A673 (cell line): ENCODE measurements at regions of chr5 and their contacts with region 1.

Region 1: DNA sequence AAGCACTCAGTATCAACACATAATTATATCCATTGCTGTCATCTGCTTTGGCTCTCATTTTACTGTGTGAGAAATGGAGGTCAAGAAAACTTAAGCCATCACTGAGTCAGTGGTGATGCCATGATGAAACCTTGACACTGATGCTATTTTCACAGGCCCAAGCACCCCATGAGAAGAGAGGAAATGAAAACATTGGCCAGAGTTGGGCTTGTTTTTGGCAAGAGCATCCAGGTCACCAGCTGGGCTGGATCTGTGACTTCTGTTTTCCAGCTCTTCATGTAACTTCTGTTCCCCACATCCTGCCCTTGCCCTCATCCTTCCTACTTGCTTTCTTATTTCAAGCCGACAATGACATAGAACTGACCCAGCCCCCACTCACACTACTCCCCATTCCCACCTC is 10.0 kb downstream of the LCP2 start:
- DNase-seq: no peak
- H3K4me3 ChIP-seq: no peak overlapping the region
- H3K27ac ChIP-seq: no peak overlapping the region
- H3K4me1 ChIP-seq: no peaks in the 10 kb centered on the region
- H3K27me3 ChIP-seq: no peaks in the 10 kb centered on the region
- CTCF ChIP-seq: no peak

Region 2: GRCh38 chr5:170145462-170145861 is 142.1 kb before region 1 on chr5:
- CTCF ChIA-PET with region 1: no interaction called
- POLR2A ChIA-PET with region 1: no interaction called
- intact Hi-C with region 1: no loop called
- DNase-seq: no peak
- H3K4me3 ChIP-seq: no peak overlapping the region
- H3K27ac ChIP-seq: no peak overlapping the region
- H3K4me1 ChIP-seq: no peaks in the 10 kb centered on the region
- H3K27me3 ChIP-seq: no peaks in the 10 kb centered on the region
- CTCF ChIP-seq: no peak

Region 3: DNA sequence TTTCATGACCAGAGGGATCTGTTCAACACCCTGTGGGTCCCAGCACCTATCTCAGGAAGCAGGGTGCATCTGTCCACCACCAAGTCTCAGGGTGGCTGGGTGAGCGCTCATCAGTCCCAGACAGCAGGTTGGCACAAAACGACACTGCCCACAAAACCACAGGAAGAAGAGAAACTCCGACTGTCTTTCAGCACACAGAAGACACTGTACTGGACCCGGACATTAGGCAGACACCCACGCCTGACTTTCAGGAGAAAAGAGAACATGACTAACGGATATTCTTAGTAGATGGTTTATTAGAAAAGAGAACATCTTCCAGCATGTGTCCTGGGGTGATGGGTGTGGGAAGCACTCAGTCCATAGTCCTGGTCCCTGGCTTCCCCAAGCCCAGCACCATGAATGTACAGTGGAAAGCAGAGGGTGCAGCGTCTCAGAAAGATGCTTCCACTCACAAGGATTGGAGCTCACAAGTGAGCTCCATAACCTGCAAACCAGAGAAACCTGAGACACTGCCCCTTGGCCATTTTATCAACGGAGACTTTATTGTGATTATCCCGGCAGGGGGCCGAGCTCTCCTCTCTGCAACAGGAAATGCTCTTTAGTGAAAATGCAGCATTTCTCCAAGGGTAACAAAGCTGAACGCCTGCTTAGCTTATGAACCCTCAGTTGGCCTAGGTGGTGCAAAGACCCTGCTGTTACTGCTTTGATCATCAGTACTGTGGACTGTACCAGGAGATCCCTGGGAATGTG is 45.8 kb after region 1 on chr5:
- CTCF ChIA-PET with region 1: no interaction called
- POLR2A ChIA-PET with region 1: interaction called, 12 read pairs
- intact Hi-C with region 1: no loop called
- DNase-seq: peak; percentile 86
- H3K4me3 ChIP-seq: no peak overlapping the region
- H3K27ac ChIP-seq: peak overlapping the region; percentile 47
- H3K4me1 ChIP-seq: peaks cover 59% of the 10 kb centered on the region
- H3K27me3 ChIP-seq: no peaks in the 10 kb centered on the region
- CTCF ChIP-seq: no peak

Region 4: DNA sequence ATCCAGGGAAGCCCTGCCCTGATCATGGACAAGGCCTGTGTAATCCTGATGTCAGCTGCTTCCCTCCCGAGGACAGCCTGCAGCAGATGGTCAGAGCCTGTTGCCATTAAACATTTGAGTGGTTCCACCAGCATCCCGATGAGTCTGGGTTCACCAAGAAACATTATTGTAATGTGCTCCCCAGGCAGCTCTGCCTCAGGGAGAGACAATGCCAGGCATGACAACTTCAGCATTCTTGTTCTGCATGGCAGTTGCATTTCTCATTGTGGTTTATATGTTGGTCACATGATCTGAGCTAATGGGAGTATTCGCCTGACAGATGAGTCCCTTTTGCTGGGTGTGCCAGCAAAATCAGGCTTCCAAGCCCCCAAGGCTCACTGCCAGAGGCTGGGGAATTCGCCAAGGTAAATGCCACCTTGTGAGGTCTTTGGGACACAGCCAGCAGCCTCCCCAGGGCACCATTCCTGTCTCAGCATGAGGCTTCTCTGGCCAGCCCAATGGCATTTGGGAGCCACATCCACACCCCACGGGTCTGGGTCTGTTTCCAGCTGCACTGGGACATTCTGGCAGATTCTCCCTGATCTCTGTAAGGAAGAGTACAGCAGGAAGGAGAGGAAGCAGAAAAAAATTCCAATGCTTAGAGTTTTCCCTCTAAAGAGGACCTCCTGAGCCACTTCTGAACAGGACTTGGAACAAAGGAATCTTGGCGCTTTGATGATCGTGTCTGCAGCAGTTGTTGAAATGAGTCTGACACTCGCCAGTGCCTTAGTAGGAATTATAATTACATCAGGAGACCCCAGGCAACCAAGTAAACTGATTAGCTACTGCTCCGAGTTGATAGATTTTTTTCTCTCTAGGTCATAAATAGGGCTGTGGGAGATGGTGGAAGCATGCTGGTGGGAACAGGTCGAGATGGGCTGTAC is 234.9 kb after region 1 on chr5:
- CTCF ChIA-PET with region 1: no interaction called
- POLR2A ChIA-PET with region 1: no interaction called
- intact Hi-C with region 1: no loop called
- DNase-seq: peak; percentile 48
- H3K4me3 ChIP-seq: no peak overlapping the region
- H3K27ac ChIP-seq: no peak overlapping the region
- H3K4me1 ChIP-seq: peaks cover 25% of the 10 kb centered on the region
- H3K27me3 ChIP-seq: no peaks in the 10 kb centered on the region
- CTCF ChIP-seq: no peak